ENCODE measurements at regions of chr12 and their contacts with region 1.

Region 1: GRCh38 chr12:2879853-2880252 is 2.8 kb downstream of the RHNO1 start:
- DNase-seq: no peak
- H3K4me3 ChIP-seq: no peak overlapping the region
- H3K27ac ChIP-seq: no peak overlapping the region
- H3K4me1 ChIP-seq: no peaks in the 10 kb centered on the region
- H3K27me3 ChIP-seq: no peaks in the 10 kb centered on the region
- CTCF ChIP-seq: no peak

Region 2: DNA sequence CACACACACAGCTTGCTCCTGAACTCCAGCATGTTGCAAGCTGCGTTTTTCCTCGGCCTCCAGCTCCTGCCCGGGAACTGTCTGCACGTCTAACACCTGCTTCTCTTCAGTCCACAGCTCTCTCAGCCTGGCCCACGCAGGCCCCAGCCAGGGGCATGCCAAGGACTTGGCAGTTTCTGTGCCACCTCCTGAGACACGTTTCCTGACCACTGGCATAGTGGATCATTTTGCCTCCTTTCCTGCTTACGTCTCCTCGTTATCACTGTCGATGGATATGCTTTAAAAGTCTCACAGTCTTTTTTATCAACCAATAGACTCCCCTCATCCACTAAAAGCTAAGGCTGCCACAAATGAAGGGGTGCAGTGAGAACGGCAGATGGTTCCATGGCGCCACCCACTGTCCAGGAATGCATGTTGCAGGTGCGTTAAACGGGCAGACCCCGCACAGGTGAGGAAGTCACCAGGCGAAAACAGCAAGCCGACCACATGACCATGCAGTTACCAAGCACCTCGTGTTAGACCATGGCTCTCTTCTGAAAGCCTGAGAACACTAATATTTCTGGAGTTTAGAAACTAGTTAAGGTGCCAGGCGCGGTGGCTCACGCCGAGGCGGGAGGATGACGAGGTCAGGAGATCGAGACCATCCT is 64.7 kb after region 1 on chr12:
- intact Hi-C with region 1: loop called (anchors 10 kb)
- DNase-seq: peak; percentile 60
- H3K4me3 ChIP-seq: peak overlapping the region; percentile 30
- H3K27ac ChIP-seq: no peak overlapping the region
- H3K4me1 ChIP-seq: no peaks in the 10 kb centered on the region
- H3K27me3 ChIP-seq: no peaks in the 10 kb centered on the region
- CTCF ChIP-seq: peak; percentile 79

Measured in colonic mucosa (tissue), 4 donors.